ENCODE measurements at regions of chr14 and their contacts with region 1.

Region 1: DNA sequence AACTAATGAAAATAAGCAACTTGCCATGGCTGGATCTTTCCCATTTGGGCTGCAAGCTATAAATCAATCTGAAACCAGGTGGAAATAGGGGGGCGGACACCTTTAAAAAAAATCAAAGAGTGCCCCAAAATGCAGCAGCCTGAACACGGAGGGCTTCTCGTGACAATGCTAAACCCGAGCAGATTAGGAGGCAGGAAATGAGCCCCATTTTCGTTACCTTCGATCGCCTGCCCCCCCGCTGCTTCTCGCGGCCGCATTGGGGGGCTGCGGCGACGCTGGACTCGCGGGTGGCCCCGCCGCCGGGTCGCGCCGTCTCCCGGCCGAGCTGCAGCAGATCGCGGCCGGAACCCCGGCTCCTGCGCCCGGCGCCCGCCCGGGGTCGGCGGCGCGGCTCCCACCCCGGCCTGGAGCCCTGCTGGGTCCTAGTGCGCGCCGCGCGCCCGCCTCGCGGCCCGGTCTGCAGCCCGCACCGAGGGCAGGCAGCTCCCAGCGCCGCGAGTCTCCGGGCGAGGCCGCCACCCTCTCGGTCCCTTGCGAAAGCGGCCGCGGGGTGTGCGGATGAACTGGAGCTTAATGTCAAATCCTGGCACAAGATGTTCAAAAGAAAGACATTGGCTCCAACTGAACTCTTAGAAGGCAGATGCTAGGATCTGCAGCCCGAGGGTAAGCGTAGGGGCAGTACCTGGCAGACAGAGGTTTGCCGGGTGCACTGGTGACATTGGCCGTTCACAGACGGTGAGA is 201.9 kb upstream of the FOXN3 start:
- DNase-seq: peak; percentile 52 to 71 (median 59)
- H3K4me3 ChIP-seq: peak overlapping the region; percentile 44
- H3K27ac ChIP-seq: peak overlapping the region in 1 of 2 donors; percentile 7
- H3K4me1 ChIP-seq: peaks cover 6% of the 10 kb centered on the region
- H3K27me3 ChIP-seq: no peaks in the 10 kb centered on the region
- CTCF ChIP-seq: peak in 1 of 3 donors; percentile 4
- EP300 ChIP-seq: no peak
- POLR2A ChIP-seq: no peak

Region 2: GRCh38 chr14:89416002-89416995 is 202.7 kb before region 1 on chr14:
- intact Hi-C with region 1: loop called in 1 of 4 experiments (anchors 10 kb)
- DNase-seq: peak; percentile 97 to 99 (median 99)
- H3K4me3 ChIP-seq: peak overlapping the region; percentile 84
- H3K27ac ChIP-seq: peak overlapping the region; percentile 82 to 98
- H3K4me1 ChIP-seq: peaks cover 9% of the 10 kb centered on the region
- H3K27me3 ChIP-seq: no peaks in the 10 kb centered on the region
- CTCF ChIP-seq: no peak
- EP300 ChIP-seq: no peak
- POLR2A ChIP-seq: peak; percentile 2

Region 3: GRCh38 chr14:89430391-89431236 is 188.4 kb before region 1 on chr14:
- intact Hi-C with region 1: no loop called
- DNase-seq: peak in 1 of 5 donors; percentile 3
- H3K4me3 ChIP-seq: peak overlapping the region; percentile 6
- H3K27ac ChIP-seq: peak overlapping the region in 1 of 2 donors; percentile 82
- H3K4me1 ChIP-seq: peaks cover 26% of the 10 kb centered on the region
- H3K27me3 ChIP-seq: no peaks in the 10 kb centered on the region
- CTCF ChIP-seq: no peak
- EP300 ChIP-seq: no peak
- POLR2A ChIP-seq: no peak

Measured in ovary (tissue), 10 donors.